ENCODE measurements at regions of chr18 and their contacts with region 1.

Region 1: GRCh38 chr18:74342416-74343043 is 26.9 kb downstream of the C18orf63 start:
- DNase-seq: no peak
- ATAC-seq: no peak
- H3K4me3 Mint-ChIP-seq: no peak overlapping the region
- H3K27ac Mint-ChIP-seq: no peak overlapping the region
- H3K4me1 Mint-ChIP-seq: peaks cover 22% of the 10 kb centered on the region
- H3K27me3 Mint-ChIP-seq: no peaks in the 10 kb centered on the region
- CTCF ChIP-seq: peak; percentile 55

Region 2: GRCh38 chr18:72762515-72763122 is 1579.9 kb before region 1 on chr18:
- CTCF ChIA-PET with region 1: interaction called, 3 read pairs
- POLR2A ChIA-PET with region 1: no interaction called
- intact Hi-C with region 1: loop called (anchors 1 kb)
- DNase-seq: no peak
- ATAC-seq: peak; percentile 52
- H3K4me3 Mint-ChIP-seq: no peak overlapping the region
- H3K27ac Mint-ChIP-seq: no peak overlapping the region
- H3K4me1 Mint-ChIP-seq: no peaks in the 10 kb centered on the region
- H3K27me3 Mint-ChIP-seq: no peaks in the 10 kb centered on the region
- CTCF ChIP-seq: peak; percentile 27

Region 3: DNA sequence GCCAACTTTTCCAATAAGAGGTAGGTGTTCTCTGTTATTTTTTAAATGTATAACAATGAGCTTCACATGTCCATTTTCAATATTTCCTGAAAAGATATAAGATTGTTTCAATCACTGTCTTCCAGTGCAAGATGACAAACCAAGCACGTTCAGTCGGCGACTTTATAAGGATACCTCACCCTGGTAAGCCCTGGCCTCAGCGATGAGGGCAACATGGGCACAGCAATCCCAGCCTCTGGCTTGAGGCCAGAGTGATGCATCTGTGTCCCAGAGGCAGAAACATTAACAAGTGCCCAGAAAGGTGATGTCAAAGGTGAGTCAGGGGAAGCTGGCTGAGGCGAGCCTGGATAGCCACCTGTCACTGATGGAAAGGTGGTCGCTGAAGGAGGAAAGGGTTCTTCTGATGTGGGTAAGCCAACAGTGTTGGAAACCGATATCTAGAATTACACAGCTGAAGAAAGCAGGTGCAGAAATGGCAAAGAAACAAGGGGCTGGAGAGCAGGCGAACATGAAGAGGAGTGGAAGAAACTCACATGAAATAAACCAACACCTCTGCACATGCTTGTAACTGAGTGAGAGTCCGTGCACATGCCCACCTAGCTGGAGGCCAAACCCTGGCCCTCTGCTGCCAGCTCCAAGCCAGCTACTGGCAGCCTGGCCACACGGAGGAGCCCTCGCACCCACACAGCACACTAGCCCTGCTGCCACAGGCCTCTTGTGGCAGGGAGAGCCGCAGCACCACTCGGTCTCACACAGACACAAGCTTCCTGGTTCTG is 260.4 kb before region 1 on chr18:
- CTCF ChIA-PET with region 1: interaction called, 10 read pairs
- POLR2A ChIA-PET with region 1: no interaction called
- intact Hi-C with region 1: loop called (anchors 1 kb)
- DNase-seq: no peak
- ATAC-seq: peak; percentile 99
- H3K4me3 Mint-ChIP-seq: peak overlapping the region; percentile 58
- H3K27ac Mint-ChIP-seq: peak overlapping the region; percentile 84
- H3K4me1 Mint-ChIP-seq: peaks cover 19% of the 10 kb centered on the region
- H3K27me3 Mint-ChIP-seq: no peaks in the 10 kb centered on the region
- CTCF ChIP-seq: no peak

Region 4: GRCh38 chr18:74171910-74172606 is 170.5 kb before region 1 on chr18:
- CTCF ChIA-PET with region 1: no interaction called
- POLR2A ChIA-PET with region 1: no interaction called
- intact Hi-C with region 1: no loop called
- DNase-seq: no peak
- ATAC-seq: no peak
- H3K4me3 Mint-ChIP-seq: peak overlapping the region; percentile 70
- H3K27ac Mint-ChIP-seq: no peak overlapping the region
- H3K4me1 Mint-ChIP-seq: peaks cover 4% of the 10 kb centered on the region
- H3K27me3 Mint-ChIP-seq: peaks cover 22% of the 10 kb centered on the region
- CTCF ChIP-seq: no peak

Region 5: DNA sequence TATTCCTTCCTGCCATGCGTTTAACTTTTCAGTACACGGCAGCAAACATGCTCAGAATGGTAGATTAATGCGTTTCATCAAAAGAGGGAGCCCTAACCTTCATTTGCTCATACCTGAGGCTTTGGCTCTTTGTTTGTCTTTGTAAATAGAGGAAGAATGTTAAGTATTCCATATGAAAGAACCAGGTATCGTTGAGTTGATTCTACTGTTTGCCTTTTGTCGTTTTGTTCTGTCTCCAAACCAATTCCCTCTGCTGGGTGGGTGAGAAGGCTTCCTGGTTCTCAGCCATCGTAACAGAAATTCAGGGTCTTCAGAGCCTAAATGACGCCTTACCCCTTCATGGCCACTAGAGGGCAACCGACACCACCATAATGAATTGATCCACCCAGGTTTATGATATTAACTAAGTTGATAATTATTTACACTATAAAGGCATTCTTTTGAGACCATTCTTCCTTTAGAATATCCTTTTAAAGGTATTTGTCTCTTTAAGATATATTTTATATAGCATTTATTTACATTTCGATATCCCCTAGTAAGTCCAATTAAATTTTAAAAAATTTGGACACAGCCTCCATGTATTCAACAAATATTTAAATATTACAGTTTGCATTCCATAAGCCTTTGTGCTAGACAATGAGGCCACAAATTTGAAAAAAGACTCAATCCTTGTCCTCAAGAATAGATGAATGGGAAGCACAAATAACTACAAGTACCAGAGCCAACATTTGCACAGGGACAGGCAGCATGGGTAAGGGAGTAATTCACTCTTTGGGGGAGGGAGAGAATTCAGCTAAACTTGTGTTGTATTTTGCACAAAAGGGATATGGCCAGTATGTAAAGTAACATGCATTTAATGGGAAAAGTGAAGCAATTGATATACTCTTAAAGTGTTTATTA is 146.1 kb before region 1 on chr18:
- CTCF ChIA-PET with region 1: interaction called, 73 read pairs
- POLR2A ChIA-PET with region 1: interaction called, 3 read pairs
- intact Hi-C with region 1: loop called (anchors 1 kb)
- DNase-seq: no peak
- ATAC-seq: peak; percentile 95
- H3K4me3 Mint-ChIP-seq: peak overlapping the region; percentile 78
- H3K27ac Mint-ChIP-seq: peak overlapping the region; percentile 79
- H3K4me1 Mint-ChIP-seq: peaks cover 22% of the 10 kb centered on the region
- H3K27me3 Mint-ChIP-seq: peaks cover 8% of the 10 kb centered on the region
- CTCF ChIP-seq: no peak

Region 6: DNA sequence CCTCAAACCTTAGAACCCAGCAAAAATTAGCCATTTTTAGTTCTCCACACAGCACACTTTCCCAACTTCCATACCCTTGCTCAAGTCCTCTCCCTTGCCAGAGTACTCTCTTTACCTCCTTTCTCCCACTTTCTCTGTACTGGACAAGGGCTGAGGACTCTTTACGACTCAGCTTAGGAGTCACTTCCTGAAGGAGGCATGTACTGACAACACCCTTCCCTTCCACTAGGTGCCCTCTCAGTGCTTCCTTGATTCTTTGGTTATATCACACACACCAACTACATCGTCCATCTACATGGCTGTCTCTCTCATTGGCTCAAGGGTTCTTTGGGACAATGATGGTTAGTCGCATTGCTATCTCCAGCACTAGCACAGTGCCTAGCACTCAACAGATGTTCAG is 32.1 kb before region 1 on chr18:
- CTCF ChIA-PET with region 1: interaction called, 16 read pairs
- POLR2A ChIA-PET with region 1: no interaction called
- intact Hi-C with region 1: loop called (anchors 1 kb)
- DNase-seq: no peak
- ATAC-seq: peak; percentile 34
- H3K4me3 Mint-ChIP-seq: no peak overlapping the region
- H3K27ac Mint-ChIP-seq: no peak overlapping the region
- H3K4me1 Mint-ChIP-seq: no peaks in the 10 kb centered on the region
- H3K27me3 Mint-ChIP-seq: peaks cover 16% of the 10 kb centered on the region
- CTCF ChIP-seq: no peak

Region 7: DNA sequence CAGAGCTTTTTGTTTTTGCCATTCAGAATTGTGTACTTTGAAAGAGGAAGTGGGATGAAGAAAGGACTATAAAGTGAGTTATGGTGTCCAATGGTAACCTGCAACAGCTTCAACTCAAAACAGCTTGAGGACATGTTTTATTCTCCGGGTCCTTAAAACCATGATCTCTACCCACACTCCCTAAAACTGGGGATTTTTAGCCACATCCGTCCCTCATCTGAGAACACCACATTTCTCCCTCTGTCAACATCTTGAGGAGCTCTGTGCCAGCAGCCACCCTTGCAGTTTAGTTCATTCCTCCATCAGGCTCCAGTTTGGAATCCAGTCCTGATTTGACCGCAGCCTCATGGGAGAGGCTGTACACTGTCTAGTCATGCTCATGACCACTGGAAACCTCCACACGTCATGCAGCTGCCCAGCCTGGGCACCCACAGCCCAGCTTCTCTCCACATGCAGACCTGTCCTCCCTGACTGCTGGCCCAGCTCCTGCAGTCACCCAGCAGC is 35.7 kb after region 1 on chr18:
- CTCF ChIA-PET with region 1: no interaction called
- POLR2A ChIA-PET with region 1: no interaction called
- intact Hi-C with region 1: no loop called
- DNase-seq: no peak
- ATAC-seq: no peak
- H3K4me3 Mint-ChIP-seq: no peak overlapping the region
- H3K27ac Mint-ChIP-seq: no peak overlapping the region
- H3K4me1 Mint-ChIP-seq: peaks cover 6% of the 10 kb centered on the region
- H3K27me3 Mint-ChIP-seq: peaks cover 3% of the 10 kb centered on the region
- CTCF ChIP-seq: no peak

Region 8: DNA sequence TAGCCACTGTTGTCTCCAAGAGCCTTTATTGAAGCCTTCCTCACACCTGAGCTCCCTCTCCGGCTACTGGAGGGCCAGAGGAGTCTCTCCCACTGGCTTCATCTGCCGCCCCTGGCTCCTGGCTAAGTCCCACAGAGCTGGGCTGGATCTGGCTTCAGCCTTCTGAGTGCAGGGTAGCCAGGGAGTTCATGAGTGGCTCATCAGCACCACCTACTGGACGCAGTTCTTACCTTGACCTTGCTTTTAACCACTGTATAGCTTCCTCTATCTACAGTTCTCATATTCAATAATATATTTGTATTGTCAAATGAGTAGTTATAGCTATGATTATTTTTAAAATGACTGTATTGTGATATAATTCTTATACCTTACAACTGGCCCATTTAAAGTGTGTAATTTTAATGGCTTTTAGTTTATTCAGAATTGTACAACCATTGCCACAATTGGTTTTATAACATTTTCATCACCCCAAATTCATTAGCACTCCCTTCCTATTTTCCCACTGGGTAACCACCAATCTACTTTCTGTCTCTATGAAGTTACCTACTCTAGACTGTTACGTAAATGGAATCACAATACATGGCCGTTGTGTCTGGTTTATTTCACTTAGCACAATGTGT is 209.5 kb after region 1 on chr18:
- CTCF ChIA-PET with region 1: interaction called, 18 read pairs
- POLR2A ChIA-PET with region 1: no interaction called
- intact Hi-C with region 1: loop called (anchors 1 kb)
- DNase-seq: peak; percentile 41
- ATAC-seq: peak; percentile 97
- H3K4me3 Mint-ChIP-seq: no peak overlapping the region
- H3K27ac Mint-ChIP-seq: no peak overlapping the region
- H3K4me1 Mint-ChIP-seq: no peaks in the 10 kb centered on the region
- H3K27me3 Mint-ChIP-seq: peaks cover 14% of the 10 kb centered on the region
- CTCF ChIP-seq: no peak

Measured in activated B cell treated with CpG ODN at 0.5 μM for 24 hours (primary cell).